ENCODE measurements at regions of chr14 and their contacts with region 1.

Region 1: GRCh38 chr14:49767562-49768300 is at the start of gene KLHDC2:
- DNase-seq: peak; percentile 92
- H3K4me3 Mint-ChIP-seq: peak within 1 kb of the TSS; percentile 98
- H3K27ac Mint-ChIP-seq: peak within 1 kb of the TSS; percentile 98
- H3K4me1 Mint-ChIP-seq: peaks cover 37% of the 10 kb centered on the region
- H3K27me3 Mint-ChIP-seq: no peaks in the 10 kb centered on the region
- total RNA-seq, gene KLHDC2: 34.3 to 34.7 TPM

Region 2: DNA sequence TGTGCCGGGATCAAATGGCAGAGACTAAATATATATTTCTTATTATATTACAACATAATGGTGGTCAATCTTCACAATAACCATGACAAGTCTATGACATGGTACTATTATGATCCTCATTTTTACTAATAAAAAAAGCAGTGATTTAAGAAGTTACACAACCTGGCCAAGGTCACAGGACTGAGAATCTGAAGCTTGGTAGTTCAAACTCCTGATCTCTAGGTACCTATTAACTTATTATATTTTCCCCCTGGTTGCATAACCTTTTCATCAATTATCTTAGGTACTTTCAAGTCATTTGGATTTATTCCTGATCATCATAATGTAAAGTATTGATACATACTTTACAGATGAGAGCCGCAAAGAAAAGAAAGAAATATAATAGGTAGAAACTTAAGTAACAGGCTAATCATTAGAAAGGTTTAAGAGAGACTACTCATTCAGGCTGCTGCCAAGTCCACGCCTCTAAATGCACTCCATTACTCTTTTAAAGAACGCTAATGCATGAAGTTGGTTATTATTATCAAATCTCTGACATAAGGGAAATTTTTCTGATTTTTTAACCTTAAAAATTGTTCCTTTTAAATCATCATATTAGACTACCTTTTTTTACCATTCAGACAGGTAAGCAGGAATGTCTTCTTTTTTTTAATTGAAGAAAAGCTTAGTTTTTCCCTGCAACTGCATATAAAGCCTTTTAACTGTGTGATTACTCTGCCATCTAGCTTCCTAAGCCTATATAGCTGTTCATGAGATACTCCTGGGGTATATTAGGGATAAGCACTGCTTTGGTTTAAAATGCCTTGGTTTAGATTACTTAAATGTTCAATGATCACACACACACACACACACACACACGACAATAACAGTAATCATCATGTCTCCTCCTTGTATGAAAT is 217.2 kb before region 1 on chr14:
- CTCF ChIA-PET with region 1: no interaction called
- POLR2A ChIA-PET with region 1: no interaction called
- DNase-seq: no peak
- H3K4me3 Mint-ChIP-seq: no peak overlapping the region
- H3K27ac Mint-ChIP-seq: no peak overlapping the region
- H3K4me1 Mint-ChIP-seq: no peaks in the 10 kb centered on the region
- H3K27me3 Mint-ChIP-seq: no peaks in the 10 kb centered on the region

Region 3: GRCh38 chr14:49598485-49599300 is 169.0 kb before region 1 on chr14 and contains the start of gene LRR1:
- CTCF ChIA-PET with region 1: interaction called, 5 read pairs
- POLR2A ChIA-PET with region 1: interaction called, 21 read pairs
- DNase-seq: peak; percentile 88
- H3K4me3 Mint-ChIP-seq: peak within 1 kb of the TSS; percentile 95
- H3K27ac Mint-ChIP-seq: peak within 1 kb of the TSS; percentile 95
- H3K4me1 Mint-ChIP-seq: peaks cover 47% of the 10 kb centered on the region
- H3K27me3 Mint-ChIP-seq: no peaks in the 10 kb centered on the region
- total RNA-seq, gene LRR1: 48.7 to 53.2 TPM

Region 4: DNA sequence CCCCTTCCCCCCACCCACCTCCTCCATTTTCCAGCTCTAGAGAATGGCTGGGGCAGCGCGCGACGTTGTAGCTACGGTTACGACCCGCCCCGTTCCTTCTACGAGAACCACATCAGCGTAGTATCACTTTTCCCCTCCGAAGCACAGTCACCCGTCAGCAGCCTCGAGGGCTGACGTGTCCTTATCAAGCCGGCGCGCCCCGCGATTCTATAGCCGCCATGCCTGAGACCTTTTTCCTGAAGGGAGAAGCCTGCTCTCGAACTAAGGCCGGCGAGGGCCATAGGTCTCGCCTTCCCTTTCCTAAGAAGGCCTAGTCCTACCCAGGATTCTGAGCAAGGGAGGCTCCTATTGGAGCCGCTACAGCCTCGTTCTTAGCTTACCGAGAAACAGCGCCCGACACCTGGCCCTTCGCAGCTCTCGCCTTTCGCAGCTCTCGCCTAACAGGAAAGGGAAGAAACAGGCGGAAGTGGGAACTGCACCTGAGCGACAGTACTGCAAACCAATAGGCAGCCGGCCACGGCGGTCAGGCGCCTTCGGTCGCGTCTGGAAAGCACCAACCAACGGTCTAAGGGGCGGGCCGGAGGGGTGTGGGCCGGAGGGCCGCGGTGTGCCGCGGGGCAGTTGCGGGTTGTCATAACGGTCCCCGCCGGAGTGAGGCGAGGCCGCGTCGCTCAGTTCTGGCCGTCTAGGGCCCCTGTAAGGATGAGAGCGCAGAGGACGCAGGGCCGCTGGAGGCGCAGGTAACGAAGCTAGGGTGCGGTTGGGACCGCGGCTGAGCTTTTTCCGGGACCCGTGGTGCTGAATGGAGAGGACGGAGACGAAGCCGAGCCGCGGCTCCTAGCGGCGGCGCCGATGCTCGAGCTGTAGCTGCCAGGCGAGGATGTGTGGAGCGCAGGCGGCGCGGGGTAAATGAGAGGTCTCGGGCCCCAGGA is 147.3 kb before region 1 on chr14 and contains the starts of genes MGAT2 and RPL36AL:
- CTCF ChIA-PET with region 1: interaction called, 10 read pairs
- POLR2A ChIA-PET with region 1: interaction called, 77 read pairs
- DNase-seq: peak; percentile 96
- H3K4me3 Mint-ChIP-seq: peak within 1 kb of the TSS; percentile 94
- H3K27ac Mint-ChIP-seq: peak within 1 kb of the TSS; percentile 94
- H3K4me1 Mint-ChIP-seq: peaks cover 50% of the 10 kb centered on the region
- H3K27me3 Mint-ChIP-seq: no peaks in the 10 kb centered on the region
- total RNA-seq, gene MGAT2: 82.7 to 86.5 TPM
- total RNA-seq, gene RPL36AL: 320 to 330 TPM

Region 5: GRCh38 chr14:49692811-49693734 is 74.7 kb before region 1 on chr14 and contains the start of gene KLHDC1:
- CTCF ChIA-PET with region 1: interaction called, 15 read pairs
- POLR2A ChIA-PET with region 1: interaction called, 99 read pairs
- DNase-seq: peak; percentile 77
- H3K4me3 Mint-ChIP-seq: peak within 1 kb of the TSS; percentile 72
- H3K27ac Mint-ChIP-seq: peak within 1 kb of the TSS; percentile 66
- H3K4me1 Mint-ChIP-seq: peaks cover 38% of the 10 kb centered on the region
- H3K27me3 Mint-ChIP-seq: no peaks in the 10 kb centered on the region
- total RNA-seq, gene KLHDC1: 2.4 to 2.6 TPM

Region 6: GRCh38 chr14:49732896-49733295 is 34.8 kb before region 1 on chr14:
- CTCF ChIA-PET with region 1: no interaction called
- POLR2A ChIA-PET with region 1: interaction called, 11 read pairs
- DNase-seq: no peak
- H3K4me3 Mint-ChIP-seq: no peak overlapping the region
- H3K27ac Mint-ChIP-seq: no peak overlapping the region
- H3K4me1 Mint-ChIP-seq: no peaks in the 10 kb centered on the region
- H3K27me3 Mint-ChIP-seq: no peaks in the 10 kb centered on the region

Region 7: GRCh38 chr14:49783394-49784010 is 15.8 kb after region 1 on chr14:
- CTCF ChIA-PET with region 1: interaction called, 3 read pairs
- POLR2A ChIA-PET with region 1: interaction called, 44 read pairs
- DNase-seq: no peak
- H3K4me3 Mint-ChIP-seq: no peak overlapping the region
- H3K27ac Mint-ChIP-seq: no peak overlapping the region
- H3K4me1 Mint-ChIP-seq: no peaks in the 10 kb centered on the region
- H3K27me3 Mint-ChIP-seq: no peaks in the 10 kb centered on the region

Measured in activated CD4-positive, alpha-beta memory T cell treated with anti-CD3 and anti-CD28 coated beads, Interleukin-2, amount 10 ng/mL, durations not matched to agents 7 days and 5 days (primary cell).